GM18951 (cell line): ENCODE measurements at regions of chr10 and their contacts with region 1.

Region 1: GRCh38 chr10:51960494-51960895 is 261.1 kb upstream of the CSTF2T start:
- POLR2A ChIP-seq: no peak

Region 2: DNA sequence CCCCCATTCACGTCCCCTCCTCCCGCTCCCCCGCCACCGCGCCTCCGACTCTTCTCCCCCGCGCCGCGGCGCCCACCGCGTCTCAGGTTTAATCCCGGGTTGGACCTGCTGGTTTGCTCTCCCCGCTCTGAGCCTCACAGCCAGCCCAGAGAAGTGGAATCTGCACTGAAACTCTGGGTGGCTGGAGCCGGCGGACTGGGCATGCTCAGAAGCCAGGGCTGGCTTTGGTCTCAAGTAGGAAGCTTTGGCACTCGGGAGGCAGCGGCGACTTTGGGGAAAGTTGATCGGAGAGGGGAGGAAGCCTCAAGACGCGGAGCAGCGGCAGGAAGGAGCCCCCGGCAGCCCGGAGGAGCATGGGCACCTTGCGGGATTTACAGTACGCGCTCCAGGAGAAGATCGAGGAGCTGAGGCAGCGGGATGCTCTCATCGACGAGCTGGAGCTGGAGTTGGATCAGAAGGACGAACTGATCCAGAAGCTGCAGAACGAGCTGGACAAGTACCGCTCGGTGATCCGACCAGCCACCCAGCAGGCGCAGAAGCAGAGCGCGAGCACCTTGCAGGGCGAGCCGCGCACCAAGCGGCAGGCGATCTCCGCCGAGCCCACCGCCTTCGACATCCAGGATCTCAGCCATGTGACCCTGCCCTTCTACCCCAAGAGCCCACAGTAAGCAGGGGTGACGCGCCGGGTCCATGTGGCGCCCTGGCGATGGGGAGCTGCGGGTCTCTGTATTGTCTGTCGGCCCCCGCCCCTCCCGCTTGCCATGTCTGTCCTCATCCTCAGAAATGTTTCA is 886.1 kb before region 1 on chr10 and contains the start of gene PRKG1:
- in situ Hi-C with region 1: loop called (anchors 25 kb)
- POLR2A ChIP-seq: no peak

Region 3: DNA sequence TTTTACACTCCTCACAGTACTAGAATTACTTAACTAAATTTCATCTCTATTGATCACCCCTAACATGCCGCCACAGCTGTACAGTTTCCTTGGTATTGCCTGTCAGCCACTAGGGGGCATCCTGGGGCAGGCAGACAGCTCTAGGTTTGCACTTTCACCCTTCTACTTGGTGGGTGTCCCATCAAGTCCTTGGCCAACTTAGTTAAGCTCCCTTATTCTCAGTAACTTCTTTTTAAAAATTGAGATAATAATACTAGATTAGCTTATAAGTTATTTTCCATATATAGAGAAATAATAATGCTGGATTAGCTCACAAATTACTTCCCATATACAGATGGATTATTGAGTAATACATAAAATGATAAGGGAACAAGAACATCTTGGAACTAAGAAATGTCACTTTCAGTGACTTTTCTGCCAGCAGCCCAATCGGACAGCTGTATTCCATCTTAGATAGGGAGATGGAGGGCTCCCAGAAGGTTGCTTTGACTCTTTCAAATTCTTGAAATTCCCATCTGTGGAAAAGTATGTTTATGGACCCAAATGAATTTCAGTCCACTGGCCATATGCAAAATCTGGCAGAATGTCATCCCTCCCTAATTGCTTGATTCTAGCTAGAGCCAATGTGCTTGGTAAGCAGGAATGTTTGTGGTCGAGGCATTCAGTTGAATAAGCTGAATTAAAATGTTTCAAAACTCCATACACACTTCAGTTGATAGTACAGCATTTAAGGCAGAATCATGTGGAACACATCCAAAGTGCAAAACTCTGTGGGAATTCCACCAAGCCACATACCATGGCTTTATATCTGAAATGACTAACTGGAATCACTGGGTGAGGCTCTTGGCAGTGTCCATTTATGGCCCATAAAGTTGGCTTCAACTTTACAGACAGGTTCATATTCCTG is 570.8 kb before region 1 on chr10:
- in situ Hi-C with region 1: loop called (anchors 25 kb)
- POLR2A ChIP-seq: no peak

Region 4: GRCh38 chr10:52451817-52452216 is 491.3 kb after region 1 on chr10:
- in situ Hi-C with region 1: no loop called
- POLR2A ChIP-seq: no peak